Sigmoid colon (tissue), 7 donors: ENCODE measurements at regions of chr9 and their contacts with region 1.

Region 1: DNA sequence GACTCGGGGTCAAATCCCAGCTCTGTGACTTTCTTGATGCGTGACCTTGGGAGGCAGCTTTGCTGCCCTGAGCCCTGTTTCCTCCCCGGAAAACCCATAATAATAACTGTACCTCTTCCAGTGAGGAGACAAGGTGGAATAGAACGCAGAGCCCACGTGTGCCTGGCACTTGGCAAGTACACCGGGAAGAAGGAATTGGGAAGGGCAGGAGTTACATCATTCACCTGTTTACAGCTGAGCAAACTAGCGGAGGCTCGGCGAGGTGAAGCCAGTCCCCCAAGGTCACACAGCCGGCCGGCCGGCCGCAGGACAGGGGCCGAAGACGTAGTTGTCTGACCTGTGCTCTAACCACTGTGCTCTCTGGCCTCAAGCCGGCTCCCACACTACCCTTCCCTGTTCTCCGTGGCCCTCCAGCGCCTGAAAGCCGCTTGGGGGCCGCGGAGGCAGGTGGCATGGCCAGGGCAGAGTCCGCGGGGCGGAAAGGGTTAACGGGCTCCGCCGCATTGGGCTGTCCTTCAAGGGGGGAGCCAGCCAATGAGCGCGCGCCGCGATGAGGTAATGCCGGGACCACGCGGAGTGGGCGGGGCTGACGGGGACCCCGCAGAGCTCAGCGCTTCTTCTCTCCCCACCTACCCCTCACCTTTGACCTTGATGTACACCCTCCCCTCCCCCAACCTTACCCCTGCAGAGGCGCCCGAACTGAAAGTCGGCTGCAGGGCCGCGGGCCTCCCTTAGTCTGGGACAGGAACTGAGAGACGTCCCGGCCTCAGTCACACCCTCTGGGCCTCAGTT is 125.2 kb downstream of the C9orf50 start:
- DNase-seq: peak; percentile 97
- H3K4me3 ChIP-seq: peak overlapping the region; percentile 61 to 71 (median 62)
- H3K27ac ChIP-seq: peak overlapping the region; percentile 84 to 99 (median 99)
- H3K4me1 ChIP-seq: peaks cover 0 to 95% (median 78%) of the 10 kb centered on the region in 4 donors
- H3K27me3 ChIP-seq: no peaks in the 10 kb centered on the region
- CTCF ChIP-seq: no peak
- EP300 ChIP-seq: no peak
- POLR2A ChIP-seq: peak in 1 of 2 donors; percentile 42

Region 2: GRCh38 chr9:129021081-129021480 is 474.6 kb before region 1 on chr9:
- intact Hi-C with region 1: no loop called
- DNase-seq: no peak
- H3K4me3 ChIP-seq: no peak overlapping the region
- H3K27ac ChIP-seq: no peak overlapping the region
- H3K4me1 ChIP-seq: peaks cover 0 to 20% (median 17%) of the 10 kb centered on the region in 4 donors
- H3K27me3 ChIP-seq: no peaks in the 10 kb centered on the region
- CTCF ChIP-seq: no peak
- EP300 ChIP-seq: no peak
- POLR2A ChIP-seq: no peak

Region 3: DNA sequence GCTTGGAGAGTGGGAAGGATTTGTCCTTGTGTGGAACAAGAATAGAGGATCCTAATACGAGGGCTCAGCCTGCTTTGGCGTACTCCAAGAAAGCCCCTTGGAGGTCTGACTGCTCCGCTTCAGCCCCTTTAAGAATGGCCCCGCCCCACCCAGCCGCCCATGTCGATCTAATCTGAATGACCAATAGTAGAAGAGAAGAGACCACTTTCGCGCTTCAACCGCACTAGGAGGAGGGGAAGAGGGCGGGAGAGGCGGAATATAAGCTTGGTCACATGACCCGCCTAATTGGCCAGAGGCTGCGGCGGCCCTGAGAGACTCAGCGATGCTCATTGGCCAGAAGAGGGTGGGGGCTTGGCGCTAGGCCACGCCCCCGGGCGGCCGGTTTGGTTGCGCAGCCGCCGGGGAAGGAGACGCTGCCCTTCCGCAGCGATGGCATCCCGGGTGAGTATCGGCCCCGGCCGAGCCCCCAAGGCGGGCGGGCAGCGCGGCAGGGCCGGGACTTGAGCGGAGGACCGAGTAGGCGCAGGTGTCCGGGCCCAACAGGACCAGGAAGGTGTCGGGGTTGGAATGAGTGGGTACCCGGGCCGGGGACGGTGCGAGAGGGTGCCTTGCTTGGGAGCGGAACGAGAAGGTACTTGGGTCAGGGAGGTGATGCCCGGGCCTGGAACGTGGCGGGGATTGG is 459.3 kb before region 1 on chr9 and contains the start of gene MIGA2:
- intact Hi-C with region 1: no loop called
- DNase-seq: peak; percentile 99
- H3K4me3 ChIP-seq: peak within 1 kb of the TSS; percentile 74 to 96 (median 84)
- H3K27ac ChIP-seq: peak within 1 kb of the TSS; percentile 84 to 88 (median 86)
- H3K4me1 ChIP-seq: peaks cover 0 to 25% (median 23%) of the 10 kb centered on the region in 4 donors
- H3K27me3 ChIP-seq: no peaks in the 10 kb centered on the region
- CTCF ChIP-seq: no peak
- EP300 ChIP-seq: no peak
- POLR2A ChIP-seq: peak; percentile 91 to 94
- total RNA-seq, gene MIGA2: 18.1 to 30.5 (median 25.1) TPM

Region 4: GRCh38 chr9:129177791-129178559 is 317.8 kb before region 1 on chr9 and contains the start of gene IER5L:
- intact Hi-C with region 1: loop called (anchors 2 kb)
- DNase-seq: peak; percentile 99
- H3K4me3 ChIP-seq: peak within 1 kb of the TSS; percentile 80 to 96 (median 93)
- H3K27ac ChIP-seq: peak within 1 kb of the TSS; percentile 97 to 99 (median 98)
- H3K4me1 ChIP-seq: peaks cover 0 to 34% (median 23%) of the 10 kb centered on the region in 4 donors
- H3K27me3 ChIP-seq: no peaks in the 10 kb centered on the region
- CTCF ChIP-seq: no peak
- EP300 ChIP-seq: no peak
- POLR2A ChIP-seq: peak; percentile 88 to 95
- total RNA-seq, gene IER5L: 4.4 to 17.4 (median 10.2) TPM

Region 5: DNA sequence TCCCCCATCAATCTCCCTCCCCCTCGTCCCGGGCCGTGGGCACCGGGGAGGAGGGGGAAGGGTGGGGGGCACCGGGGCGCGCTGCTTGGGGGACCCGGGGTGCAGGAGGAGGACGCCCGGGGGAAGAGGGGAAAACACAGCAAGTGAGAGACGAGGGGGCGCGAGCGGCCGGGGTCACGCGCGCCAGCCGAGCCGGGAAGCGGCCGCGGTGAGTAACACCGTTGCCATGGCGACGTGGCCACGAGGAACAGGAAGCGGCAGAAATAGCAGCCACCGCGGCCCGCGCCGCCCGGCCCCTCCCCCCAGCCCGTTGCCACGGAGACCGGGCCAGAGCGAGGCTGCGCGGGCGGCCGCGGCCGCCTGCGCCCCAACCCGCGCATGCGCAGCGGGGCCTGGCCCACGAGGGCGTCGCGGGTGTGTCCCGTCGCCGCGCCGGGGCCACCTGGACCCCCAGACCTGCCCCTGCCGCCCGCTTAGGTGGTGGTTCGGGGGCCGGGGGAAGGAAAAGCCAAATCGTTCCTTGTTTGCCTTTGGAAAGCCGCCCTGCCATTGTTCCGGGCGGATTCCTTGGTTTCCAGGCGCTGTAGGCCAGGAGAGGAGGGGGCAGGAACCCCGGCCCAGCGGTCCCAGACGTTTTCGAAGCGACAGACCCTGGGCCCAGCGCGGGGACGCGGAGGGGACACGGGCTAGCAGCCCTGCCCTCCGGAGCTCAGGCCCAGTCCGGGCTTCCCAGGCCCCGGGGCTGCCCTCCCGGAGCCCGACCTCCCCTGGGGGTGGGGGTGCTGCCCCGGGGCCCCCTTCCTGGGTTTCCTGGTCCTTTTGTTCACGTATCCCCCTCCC is 82.0 kb before region 1 on chr9:
- intact Hi-C with region 1: loop called (anchors 2 kb)
- DNase-seq: peak; percentile 99
- H3K4me3 ChIP-seq: peak overlapping the region; percentile 49 to 63 (median 57)
- H3K27ac ChIP-seq: peak overlapping the region; percentile 94 to 100 (median 98)
- H3K4me1 ChIP-seq: peaks cover 0 to 38% (median 32%) of the 10 kb centered on the region in 4 donors
- H3K27me3 ChIP-seq: no peaks in the 10 kb centered on the region
- CTCF ChIP-seq: no peak
- EP300 ChIP-seq: peak in 2 of 4 donors; percentile 41 to 91
- POLR2A ChIP-seq: peak; percentile 74 to 81

Region 6: GRCh38 chr9:129536041-129536440 is 40.3 kb after region 1 on chr9:
- intact Hi-C with region 1: no loop called
- DNase-seq: peak; percentile 8
- H3K4me3 ChIP-seq: no peak overlapping the region
- H3K27ac ChIP-seq: no peak overlapping the region
- H3K4me1 ChIP-seq: no peaks in the 10 kb centered on the region
- H3K27me3 ChIP-seq: no peaks in the 10 kb centered on the region
- CTCF ChIP-seq: no peak
- EP300 ChIP-seq: no peak
- POLR2A ChIP-seq: no peak

Region 7: GRCh38 chr9:129550199-129550839 is 54.6 kb after region 1 on chr9:
- intact Hi-C with region 1: loop called (anchors 2 kb)
- DNase-seq: peak; percentile 93
- H3K4me3 ChIP-seq: peak overlapping the region; percentile 41 to 71 (median 56)
- H3K27ac ChIP-seq: peak overlapping the region; percentile 73 to 86 (median 78)
- H3K4me1 ChIP-seq: peaks cover 0 to 16% (median 13%) of the 10 kb centered on the region in 4 donors
- H3K27me3 ChIP-seq: no peaks in the 10 kb centered on the region
- CTCF ChIP-seq: no peak
- EP300 ChIP-seq: no peak
- POLR2A ChIP-seq: no peak

Region 8: DNA sequence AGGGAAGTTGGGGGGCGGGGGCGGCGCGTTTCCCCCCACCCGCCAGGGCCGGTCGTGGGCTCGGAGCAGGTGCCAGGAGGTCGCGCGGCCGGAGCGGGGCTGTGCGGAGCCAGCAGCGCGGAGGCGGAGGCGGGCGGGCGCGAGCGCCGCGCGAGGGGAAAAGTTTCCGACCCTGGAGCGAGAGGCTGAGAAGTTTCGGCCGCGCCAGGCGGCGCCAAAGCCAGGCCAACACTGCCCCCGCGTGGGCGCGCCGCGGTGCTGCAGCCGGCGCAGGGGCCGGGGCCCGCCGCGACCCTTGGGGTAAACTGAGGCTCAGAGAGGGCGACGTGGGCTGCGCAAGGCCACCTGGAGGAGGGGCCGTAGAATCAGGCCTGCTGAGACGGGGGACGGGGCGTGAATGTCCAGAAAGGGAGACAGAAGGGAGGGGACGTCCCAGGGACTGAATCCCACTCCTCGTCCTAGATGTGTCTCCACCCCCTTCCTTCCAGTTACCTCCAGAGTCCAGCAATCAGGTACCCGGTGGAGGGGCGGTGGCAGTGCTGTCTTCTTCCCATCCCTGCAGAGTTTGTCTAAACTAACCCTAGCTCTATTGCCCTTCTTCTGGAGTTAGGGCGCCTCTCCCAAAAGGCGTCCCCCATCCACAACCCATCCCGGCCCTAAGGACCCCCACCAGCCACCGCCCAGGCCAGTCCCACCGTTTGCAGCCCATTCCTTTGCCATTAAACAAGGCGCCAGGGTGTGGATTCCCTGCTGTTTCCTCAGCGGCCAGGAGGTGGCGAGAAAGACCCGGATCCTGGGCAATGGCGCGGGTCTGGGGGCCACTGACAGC is 115.0 kb after region 1 on chr9:
- intact Hi-C with region 1: loop called (anchors 2 kb)
- DNase-seq: peak; percentile 90
- H3K4me3 ChIP-seq: peak overlapping the region; percentile 45 to 75 (median 68)
- H3K27ac ChIP-seq: peak overlapping the region; percentile 88 to 92 (median 90)
- H3K4me1 ChIP-seq: peaks cover 0 to 48% (median 35%) of the 10 kb centered on the region in 4 donors
- H3K27me3 ChIP-seq: no peaks in the 10 kb centered on the region
- CTCF ChIP-seq: peak; percentile 73 to 85 (median 82)
- EP300 ChIP-seq: no peak
- POLR2A ChIP-seq: no peak